Activated CD8-positive, alpha-beta T cell treated with anti-CD3 and anti-CD28 coated beads for 36 hours (primary cell): ENCODE measurements at regions of chr15 and their contacts with region 1.

Region 1: GRCh38 chr15:23003736-23004135 is 23.6 kb upstream of the CYFIP1 start:
- DNase-seq: no peak
- ATAC-seq: no peak
- H3K4me3 Mint-ChIP-seq: no peak overlapping the region
- H3K27ac Mint-ChIP-seq: no peak overlapping the region
- H3K4me1 Mint-ChIP-seq: no peaks in the 10 kb centered on the region
- H3K27me3 Mint-ChIP-seq: no peaks in the 10 kb centered on the region
- CTCF ChIP-seq: no peak

Region 2: DNA sequence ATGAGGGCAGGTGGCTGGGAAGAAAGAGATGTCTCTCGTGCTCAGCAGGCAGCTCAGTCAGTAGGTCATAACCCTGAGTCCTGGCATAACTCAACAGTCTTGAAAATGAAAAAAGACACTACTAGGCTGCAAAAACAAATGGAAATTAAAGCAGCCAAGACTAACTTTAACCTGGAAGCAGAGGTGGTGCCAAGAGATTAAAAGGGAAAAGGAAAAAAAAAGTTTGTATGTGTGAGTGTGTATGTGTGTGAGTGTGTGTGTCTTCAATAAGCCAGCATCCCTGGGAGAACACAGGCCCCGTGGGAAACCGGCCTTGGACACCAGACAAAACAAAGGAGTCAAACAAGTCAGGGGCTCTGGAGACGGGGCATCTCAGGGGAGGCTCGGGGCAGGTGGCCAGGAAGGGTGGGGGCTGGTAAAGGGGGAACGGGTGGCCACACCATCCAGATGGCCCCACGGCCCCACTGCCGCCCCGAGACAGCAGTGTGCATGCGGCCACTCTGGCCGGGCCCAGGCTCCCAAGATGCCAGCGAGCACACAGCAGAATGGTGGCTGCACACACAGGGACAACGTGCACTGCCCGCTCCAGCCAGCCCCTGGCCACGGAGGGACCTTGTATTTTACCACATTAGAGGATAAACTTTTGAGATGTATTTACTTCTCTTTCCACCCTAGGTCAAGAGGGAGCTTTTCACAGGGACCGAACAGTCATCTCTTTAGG is 47.3 kb before region 1 on chr15:
- CTCF ChIA-PET with region 1: no interaction called
- POLR2A ChIA-PET with region 1: no interaction called
- intact Hi-C with region 1: loop called (anchors 5 kb)
- DNase-seq: no peak
- ATAC-seq: no peak
- H3K4me3 Mint-ChIP-seq: no peak overlapping the region
- H3K27ac Mint-ChIP-seq: no peak overlapping the region
- H3K4me1 Mint-ChIP-seq: no peaks in the 10 kb centered on the region
- H3K27me3 Mint-ChIP-seq: no peaks in the 10 kb centered on the region
- CTCF ChIP-seq: no peak

Region 3: DNA sequence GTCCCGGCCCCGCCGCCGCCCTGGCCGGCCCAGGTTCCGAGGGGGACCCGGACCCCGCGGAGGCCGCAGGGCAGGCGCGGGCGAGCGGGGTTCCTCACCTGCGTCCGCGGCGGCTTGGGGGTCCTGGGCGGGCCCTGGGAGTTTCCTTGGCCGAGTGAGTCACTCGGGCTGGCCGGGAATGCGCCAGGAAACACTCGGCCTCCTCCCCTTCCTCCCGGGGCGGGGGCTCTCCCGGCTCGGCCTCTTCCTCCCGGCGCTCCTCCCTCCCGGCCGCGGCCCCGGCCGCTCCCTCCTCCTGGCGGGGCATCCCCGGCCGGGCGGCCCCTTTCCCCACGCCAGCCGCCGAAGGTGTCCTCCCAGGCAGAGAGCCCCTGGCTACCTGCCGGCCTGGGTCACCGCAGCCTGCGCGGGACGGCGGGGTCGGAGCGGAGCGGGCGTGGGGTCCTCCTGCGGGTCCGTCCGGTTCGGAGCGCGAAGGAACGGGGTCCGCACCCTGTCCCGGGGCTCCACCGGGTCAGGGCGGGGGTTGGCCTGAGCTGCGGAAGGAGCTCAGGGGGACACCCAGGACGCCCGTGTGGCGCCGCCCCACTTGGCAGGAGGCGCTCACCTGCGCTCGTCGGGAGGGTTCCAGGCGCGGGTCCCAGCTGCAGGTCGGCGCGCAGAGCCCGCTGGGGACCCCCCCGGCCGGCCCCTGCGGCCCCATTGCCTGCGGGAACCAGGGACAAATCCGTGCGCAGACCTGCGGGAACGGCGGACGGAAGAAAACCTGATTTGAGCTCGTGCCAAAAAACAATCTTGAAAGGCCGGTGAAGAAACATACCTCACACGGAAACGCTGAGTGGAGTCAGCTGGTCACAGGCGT is 23.3 kb before region 1 on chr15 and contains the start of gene CYFIP1:
- CTCF ChIA-PET with region 1: no interaction called
- POLR2A ChIA-PET with region 1: no interaction called
- intact Hi-C with region 1: no loop called
- DNase-seq: peak; percentile 5
- ATAC-seq: peak; percentile 42
- H3K4me3 Mint-ChIP-seq: peak within 1 kb of the TSS; percentile 82
- H3K27ac Mint-ChIP-seq: no peak within 1 kb of the TSS
- H3K4me1 Mint-ChIP-seq: peaks cover 4% of the 10 kb centered on the region
- H3K27me3 Mint-ChIP-seq: peaks cover 13% of the 10 kb centered on the region
- CTCF ChIP-seq: no peak
- total RNA-seq, gene CYFIP1: 10.4 to 11.6 TPM